IMR-90 (cell line): ENCODE measurements at regions of chr4 and their contacts with region 1.

Region 1: DNA sequence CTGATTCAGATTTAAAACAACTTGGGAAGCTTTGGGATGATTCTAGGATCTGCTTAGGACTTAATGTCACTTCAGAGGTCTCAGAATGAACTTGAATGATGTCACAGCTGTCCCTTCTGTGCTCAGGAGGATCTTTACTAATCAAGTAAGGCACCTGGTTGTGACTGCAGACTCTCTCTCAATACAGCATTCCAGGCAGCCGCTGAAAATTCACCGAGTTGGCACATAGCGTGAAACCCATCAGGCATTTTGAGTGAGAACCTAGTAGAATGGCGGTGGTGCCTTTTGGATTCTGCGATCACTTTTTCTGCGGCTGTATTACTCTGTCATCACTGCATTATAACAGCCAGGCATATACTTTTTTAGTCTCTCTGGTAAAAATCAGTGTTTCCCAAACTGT is 16.5 kb downstream of the SNX25 start:
- DNase-seq: no peak
- ATAC-seq: no peak
- H3K4me3 ChIP-seq: no peak overlapping the region
- H3K27ac ChIP-seq: no peak overlapping the region
- H3K4me1 ChIP-seq: peaks cover 8% of the 10 kb centered on the region
- H3K27me3 ChIP-seq: no peaks in the 10 kb centered on the region
- CTCF ChIP-seq: no peak
- POLR2A ChIP-seq: no peak
- RAD21 ChIP-seq: no peak

Region 2: GRCh38 chr4:185238750-185239149 is 12.8 kb after region 1 on chr4:
- CTCF ChIA-PET with region 1: no interaction called
- POLR2A ChIA-PET with region 1: no interaction called
- dilution Hi-C with region 1: no loop called
- in situ Hi-C with region 1: no loop called
- intact Hi-C with region 1: loop called (anchors 1 kb)
- DNase-seq: peak; percentile 21
- ATAC-seq: no peak
- H3K4me3 ChIP-seq: no peak overlapping the region
- H3K27ac ChIP-seq: no peak overlapping the region
- H3K4me1 ChIP-seq: peaks cover 8% of the 10 kb centered on the region
- H3K27me3 ChIP-seq: no peaks in the 10 kb centered on the region
- CTCF ChIP-seq: no peak
- POLR2A ChIP-seq: no peak
- RAD21 ChIP-seq: no peak

Region 3: GRCh38 chr4:185481401-185481800 is 255.5 kb after region 1 on chr4:
- CTCF ChIA-PET with region 1: no interaction called
- POLR2A ChIA-PET with region 1: no interaction called
- dilution Hi-C with region 1: no loop called
- in situ Hi-C with region 1: no loop called
- intact Hi-C with region 1: no loop called
- DNase-seq: no peak
- ATAC-seq: no peak
- H3K4me3 ChIP-seq: no peak overlapping the region
- H3K27ac ChIP-seq: no peak overlapping the region
- H3K4me1 ChIP-seq: no peaks in the 10 kb centered on the region
- H3K27me3 ChIP-seq: peaks cover 17% of the 10 kb centered on the region
- CTCF ChIP-seq: no peak
- POLR2A ChIP-seq: no peak
- RAD21 ChIP-seq: no peak